GM10248 (cell line): ENCODE measurements at regions of chr6 and their contacts with region 1.

Region 1: DNA sequence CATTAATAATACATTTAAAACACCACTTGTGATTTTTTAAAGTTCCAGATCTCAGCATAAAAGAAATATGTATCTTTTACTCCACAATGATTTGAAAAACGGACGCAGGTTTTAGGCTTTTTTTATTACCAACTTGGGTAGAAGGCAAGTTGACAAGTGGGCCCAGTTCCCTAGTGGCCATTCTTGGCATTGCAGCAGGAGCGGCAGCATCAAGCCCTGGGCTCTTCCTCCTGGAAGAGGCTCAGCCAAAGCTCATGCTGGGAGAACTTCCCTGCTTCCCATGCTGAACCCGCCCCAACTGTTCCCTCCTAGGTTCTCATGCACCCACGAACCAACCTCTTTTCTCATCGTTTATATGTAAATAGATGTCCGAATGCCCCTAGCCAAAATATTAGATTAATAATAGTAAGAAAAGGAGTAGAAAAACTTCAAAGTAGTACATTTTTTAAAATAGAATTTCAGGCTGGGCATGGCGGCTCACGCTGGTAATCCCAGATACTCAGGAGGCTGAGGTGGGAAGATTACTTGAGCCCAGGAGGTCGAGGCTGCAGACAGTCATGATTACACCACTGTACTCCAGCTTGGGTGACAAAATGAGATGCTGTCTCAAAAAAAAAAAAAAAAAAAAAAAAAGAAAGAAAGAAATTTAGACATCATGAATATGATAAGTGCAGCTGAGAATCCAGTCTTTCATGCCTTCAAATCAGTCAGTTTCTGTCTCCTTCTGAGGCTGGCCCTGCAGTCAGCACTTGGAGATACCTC is 18.2 kb upstream of the MYB start:
- DNase-seq: no peak
- CTCF ChIP-seq: peak; percentile 71

Region 2: GRCh38 chr6:135121434-135121833 is 41.4 kb before region 1 on chr6:
- CTCF ChIA-PET with region 1: interaction called, 18 read pairs
- POLR2A ChIA-PET with region 1: no interaction called
- DNase-seq: no peak
- CTCF ChIP-seq: no peak

Region 3: GRCh38 chr6:135176464-135176863 is 13.6 kb after region 1 on chr6:
- CTCF ChIA-PET with region 1: interaction called, 40 read pairs
- POLR2A ChIA-PET with region 1: no interaction called
- DNase-seq: no peak
- CTCF ChIP-seq: no peak

Region 4: GRCh38 chr6:135183532-135184440 is 20.9 kb after region 1 on chr6:
- CTCF ChIA-PET with region 1: interaction called, 40 read pairs
- POLR2A ChIA-PET with region 1: no interaction called
- DNase-seq: peak; percentile 64
- CTCF ChIP-seq: peak; percentile 78